Activated CD8-positive, alpha-beta T cell treated with anti-CD3 and anti-CD28 coated beads for 36 hours (primary cell): ENCODE measurements at regions of chr2 and their contacts with region 1.

Region 1: GRCh38 chr2:85595301-85596025 is at the start of gene RNF181:
- DNase-seq: peak; percentile 97
- ATAC-seq: peak; percentile 100
- H3K4me3 Mint-ChIP-seq: peak within 1 kb of the TSS; percentile 88
- H3K27ac Mint-ChIP-seq: peak within 1 kb of the TSS; percentile 98
- H3K4me1 Mint-ChIP-seq: peaks cover 36% of the 10 kb centered on the region
- H3K27me3 Mint-ChIP-seq: no peaks in the 10 kb centered on the region
- CTCF ChIP-seq: no peak
- total RNA-seq, gene RNF181: 112 to 117 TPM

Region 2: GRCh38 chr2:85302121-85302520 is 293.3 kb before region 1 on chr2:
- CTCF ChIA-PET with region 1: no interaction called
- POLR2A ChIA-PET with region 1: no interaction called
- intact Hi-C with region 1: no loop called
- DNase-seq: no peak
- ATAC-seq: no peak
- H3K4me3 Mint-ChIP-seq: no peak overlapping the region
- H3K27ac Mint-ChIP-seq: no peak overlapping the region
- H3K4me1 Mint-ChIP-seq: peaks cover 7% of the 10 kb centered on the region
- H3K27me3 Mint-ChIP-seq: peaks cover 3% of the 10 kb centered on the region
- CTCF ChIP-seq: no peak

Region 3: DNA sequence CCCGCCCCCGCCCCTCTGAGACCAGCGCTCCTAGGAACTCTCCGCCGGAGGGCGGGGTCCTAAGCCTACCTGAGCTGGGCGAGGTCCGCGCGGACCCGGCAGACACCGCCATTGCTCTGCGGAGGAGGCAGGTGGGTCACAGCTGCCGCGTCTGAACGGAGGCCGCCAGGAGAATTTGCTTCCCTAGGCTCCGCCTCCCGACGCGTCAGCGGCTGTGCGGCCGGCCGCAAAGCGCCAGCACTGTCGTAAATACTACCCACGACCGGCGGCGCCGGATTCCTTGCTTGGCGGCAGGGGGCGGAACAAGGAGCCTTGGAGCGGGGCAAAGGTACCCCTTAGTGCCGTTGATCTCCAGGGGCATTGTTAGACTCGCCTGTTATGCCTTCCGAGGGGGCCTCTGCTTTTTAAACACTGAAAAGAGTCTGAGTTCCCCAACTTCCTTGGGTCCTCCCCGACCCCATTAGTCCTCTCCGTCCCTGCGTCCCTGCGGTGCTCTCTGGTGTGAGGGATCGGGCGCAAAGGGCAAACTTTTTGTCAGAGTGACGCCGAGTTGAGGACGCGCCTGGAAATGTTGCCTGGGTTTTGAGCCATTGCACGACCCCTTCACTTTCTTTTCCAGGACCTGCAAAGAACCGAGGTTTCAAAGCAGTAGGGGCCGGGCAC is 34.0 kb before region 1 on chr2 and contains the start of gene GGCX:
- CTCF ChIA-PET with region 1: interaction called, 3 read pairs
- POLR2A ChIA-PET with region 1: interaction called, 12 read pairs
- intact Hi-C with region 1: no loop called
- DNase-seq: peak; percentile 98
- ATAC-seq: peak; percentile 95
- H3K4me3 Mint-ChIP-seq: peak within 1 kb of the TSS; percentile 100
- H3K27ac Mint-ChIP-seq: peak within 1 kb of the TSS; percentile 100
- H3K4me1 Mint-ChIP-seq: peaks cover 32% of the 10 kb centered on the region
- H3K27me3 Mint-ChIP-seq: no peaks in the 10 kb centered on the region
- CTCF ChIP-seq: no peak
- total RNA-seq, gene GGCX: 14.6 to 16.7 TPM

Region 4: DNA sequence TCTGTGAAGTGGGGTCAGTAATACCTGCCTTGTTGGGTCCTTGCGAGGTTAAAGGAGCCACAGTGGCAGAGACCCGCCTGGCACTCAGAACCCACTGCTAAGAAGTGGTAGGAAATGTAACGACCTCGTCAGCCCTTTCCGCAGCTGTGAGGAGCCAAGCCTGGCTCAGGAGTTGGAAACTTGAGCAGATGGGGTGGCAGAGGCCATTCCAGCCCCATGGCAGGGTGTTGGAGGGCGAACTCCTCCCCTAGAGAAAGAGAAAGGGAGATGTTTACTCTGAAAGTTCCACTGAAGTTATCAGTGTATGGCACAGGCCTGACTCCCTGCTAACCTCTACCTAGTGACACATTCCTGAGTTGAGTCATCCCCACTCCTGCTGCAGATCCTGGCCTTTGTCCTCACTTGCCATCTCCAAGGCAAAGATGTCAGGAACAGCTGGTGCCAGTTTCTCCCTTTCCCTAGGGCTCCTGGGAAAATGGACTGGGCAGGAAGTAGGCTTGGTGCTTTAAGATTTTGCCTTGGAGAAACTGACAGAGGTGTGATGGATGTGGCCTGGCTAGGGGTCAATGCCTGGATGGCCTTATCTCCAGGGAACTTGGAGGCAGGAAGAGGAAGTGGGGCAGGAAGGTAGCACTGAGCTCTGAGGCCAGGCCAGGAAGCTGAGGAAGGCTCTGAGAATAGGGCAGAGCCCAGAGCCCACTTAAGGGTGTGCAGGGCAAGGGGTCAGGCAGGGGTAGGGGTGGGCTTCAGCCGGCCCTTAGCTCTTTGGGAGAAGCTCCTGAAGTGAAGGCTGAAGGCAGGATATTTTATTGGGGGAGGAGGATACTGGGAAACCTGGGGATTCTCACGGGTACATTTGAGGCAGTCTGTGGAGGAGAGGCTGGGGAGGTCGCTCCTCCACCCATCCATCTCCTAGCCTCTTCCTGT is 10.3 kb before region 1 on chr2:
- CTCF ChIA-PET with region 1: interaction called, 3 read pairs
- POLR2A ChIA-PET with region 1: interaction called, 15 read pairs
- intact Hi-C with region 1: no loop called
- DNase-seq: peak; percentile 33
- ATAC-seq: peak; percentile 70
- H3K4me3 Mint-ChIP-seq: peak overlapping the region; percentile 81
- H3K27ac Mint-ChIP-seq: peak overlapping the region; percentile 91
- H3K4me1 Mint-ChIP-seq: peaks cover 40% of the 10 kb centered on the region
- H3K27me3 Mint-ChIP-seq: no peaks in the 10 kb centered on the region
- CTCF ChIP-seq: no peak

Region 5: DNA sequence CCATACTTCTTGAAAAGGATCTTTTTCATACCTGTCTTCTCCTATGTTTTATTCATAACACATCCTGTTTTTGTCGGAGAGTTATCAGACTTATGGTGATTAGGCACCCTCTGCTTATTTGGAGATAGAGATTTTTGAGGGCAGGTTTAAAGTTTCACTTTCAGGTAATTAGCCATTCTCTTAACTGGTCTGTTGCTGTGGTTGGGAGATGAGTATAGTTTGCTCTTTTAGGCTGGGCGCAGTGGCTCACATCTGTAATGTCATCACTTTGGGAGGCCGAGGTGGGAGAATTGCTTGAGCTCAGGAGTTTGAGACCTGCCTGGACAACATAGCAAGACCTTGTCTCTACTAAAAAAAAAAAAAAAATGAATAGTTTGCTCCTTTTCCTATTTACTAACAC is 47.3 kb after region 1 on chr2:
- CTCF ChIA-PET with region 1: interaction called, 14 read pairs
- POLR2A ChIA-PET with region 1: no interaction called
- intact Hi-C with region 1: no loop called
- DNase-seq: peak; percentile 27
- ATAC-seq: peak; percentile 72
- H3K4me3 Mint-ChIP-seq: no peak overlapping the region
- H3K27ac Mint-ChIP-seq: peak overlapping the region; percentile 70
- H3K4me1 Mint-ChIP-seq: peaks cover 12% of the 10 kb centered on the region
- H3K27me3 Mint-ChIP-seq: no peaks in the 10 kb centered on the region
- CTCF ChIP-seq: no peak